ENCODE measurements at regions of chr2 and their contacts with region 1.

Region 1: GRCh38 chr2:61888267-61889055 is at the start of gene CCT4:
- DNase-seq: peak; percentile 86
- H3K4me3 Mint-ChIP-seq: peak within 1 kb of the TSS; percentile 95
- H3K27ac Mint-ChIP-seq: peak within 1 kb of the TSS; percentile 97
- H3K4me1 Mint-ChIP-seq: peaks cover 23% of the 10 kb centered on the region
- H3K27me3 Mint-ChIP-seq: no peaks in the 10 kb centered on the region
- total RNA-seq, gene CCT4: 354 and 381 TPM in 2 replicates

Region 2: DNA sequence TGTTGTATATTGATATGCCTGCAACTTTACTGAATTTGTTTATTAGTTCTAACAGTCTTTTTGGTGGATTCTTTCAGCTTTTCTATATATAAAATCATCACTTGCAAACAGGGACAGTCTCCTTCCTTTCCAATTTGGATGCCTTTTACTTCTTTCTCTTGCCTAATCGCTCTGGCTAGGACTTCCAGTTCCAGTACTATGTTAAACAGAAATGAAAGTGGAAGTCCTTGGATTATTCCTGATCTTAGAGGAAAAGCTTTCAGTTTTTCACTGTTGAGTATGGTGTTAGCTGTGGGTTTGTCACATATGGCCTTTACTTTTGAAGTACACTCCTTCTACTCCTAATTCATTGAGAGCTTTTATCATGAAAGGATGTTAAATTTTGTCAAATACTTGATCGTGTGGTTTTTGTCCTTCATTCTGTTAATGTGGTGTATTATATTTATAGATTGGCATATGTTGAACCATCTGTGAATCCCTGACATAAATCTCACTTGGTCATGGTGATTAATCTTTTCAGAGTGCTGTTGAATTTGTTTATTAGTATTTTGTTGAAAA is 954.2 kb before region 1 on chr2:
- intact Hi-C with region 1: loop called (anchors 10 kb)
- DNase-seq: no peak
- H3K4me3 Mint-ChIP-seq: no peak overlapping the region
- H3K27ac Mint-ChIP-seq: no peak overlapping the region
- H3K4me1 Mint-ChIP-seq: peaks cover 17% of the 10 kb centered on the region
- H3K27me3 Mint-ChIP-seq: no peaks in the 10 kb centered on the region

Region 3: DNA sequence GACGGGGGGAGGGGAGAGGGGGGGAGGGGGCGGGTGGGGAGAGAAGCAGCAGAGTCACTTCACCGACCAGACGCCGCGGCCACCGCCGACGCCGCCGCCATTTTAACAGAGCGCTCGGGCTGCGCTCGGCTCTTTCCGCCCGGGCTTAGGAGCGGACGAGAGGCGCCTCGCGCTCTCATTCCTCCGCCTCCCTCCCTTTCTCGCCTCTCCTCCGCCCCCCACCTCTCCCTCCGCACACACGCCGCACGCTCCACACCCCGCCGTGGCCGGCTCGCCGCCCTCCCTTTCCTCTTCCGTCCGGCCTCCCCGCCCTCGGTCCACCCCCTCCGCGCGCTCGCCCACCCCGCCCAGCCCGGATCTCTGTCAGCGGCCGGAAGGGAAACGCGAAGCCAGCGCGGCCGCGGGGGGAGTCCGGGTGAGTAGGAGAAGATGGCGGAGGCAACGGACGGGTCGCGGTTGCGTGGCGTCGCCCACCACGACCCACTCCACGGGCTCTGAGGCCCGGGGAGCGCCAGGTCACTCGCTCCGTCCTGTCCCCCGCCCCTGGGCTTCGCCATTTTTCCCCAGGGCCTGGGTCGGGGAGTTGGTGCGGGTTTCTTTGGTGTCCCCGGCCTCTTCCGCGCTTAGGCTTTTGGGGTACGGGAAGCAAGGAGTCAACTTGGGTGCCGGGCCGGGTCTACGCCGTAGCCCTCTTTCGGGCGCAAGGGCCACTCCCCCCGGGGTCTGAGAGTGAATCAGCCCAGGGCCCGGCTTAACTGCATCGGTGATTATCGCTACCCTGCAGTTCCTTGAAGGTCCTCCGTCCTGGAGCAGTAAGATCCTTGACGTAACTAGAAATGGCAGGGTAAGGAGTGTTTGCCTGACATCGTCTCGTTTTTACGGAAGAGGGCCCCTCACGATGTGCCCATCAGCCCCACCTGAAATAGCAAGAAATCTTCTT is 417.2 kb before region 1 on chr2 and contains the start of gene USP34:
- intact Hi-C with region 1: loop called (anchors 5 kb)
- DNase-seq: peak; percentile 88
- H3K4me3 Mint-ChIP-seq: peak within 1 kb of the TSS; percentile 95
- H3K27ac Mint-ChIP-seq: peak within 1 kb of the TSS; percentile 94
- H3K4me1 Mint-ChIP-seq: peaks cover 28% of the 10 kb centered on the region
- H3K27me3 Mint-ChIP-seq: no peaks in the 10 kb centered on the region
- total RNA-seq, gene USP34: 91.3 and 98.1 TPM in 2 replicates

Region 4: GRCh38 chr2:61694312-61695274 is 193.9 kb before region 1 on chr2:
- intact Hi-C with region 1: loop called (anchors 10 kb)
- DNase-seq: peak; percentile 80
- H3K4me3 Mint-ChIP-seq: peak overlapping the region; percentile 89
- H3K27ac Mint-ChIP-seq: peak overlapping the region; percentile 76
- H3K4me1 Mint-ChIP-seq: peaks cover 14% of the 10 kb centered on the region
- H3K27me3 Mint-ChIP-seq: peaks cover 2% of the 10 kb centered on the region

Region 5: GRCh38 chr2:61877571-61878245 is 10.8 kb before region 1 on chr2:
- intact Hi-C with region 1: no loop called
- DNase-seq: no peak
- H3K4me3 Mint-ChIP-seq: no peak overlapping the region
- H3K27ac Mint-ChIP-seq: no peak overlapping the region
- H3K4me1 Mint-ChIP-seq: no peaks in the 10 kb centered on the region
- H3K27me3 Mint-ChIP-seq: no peaks in the 10 kb centered on the region

Region 6: DNA sequence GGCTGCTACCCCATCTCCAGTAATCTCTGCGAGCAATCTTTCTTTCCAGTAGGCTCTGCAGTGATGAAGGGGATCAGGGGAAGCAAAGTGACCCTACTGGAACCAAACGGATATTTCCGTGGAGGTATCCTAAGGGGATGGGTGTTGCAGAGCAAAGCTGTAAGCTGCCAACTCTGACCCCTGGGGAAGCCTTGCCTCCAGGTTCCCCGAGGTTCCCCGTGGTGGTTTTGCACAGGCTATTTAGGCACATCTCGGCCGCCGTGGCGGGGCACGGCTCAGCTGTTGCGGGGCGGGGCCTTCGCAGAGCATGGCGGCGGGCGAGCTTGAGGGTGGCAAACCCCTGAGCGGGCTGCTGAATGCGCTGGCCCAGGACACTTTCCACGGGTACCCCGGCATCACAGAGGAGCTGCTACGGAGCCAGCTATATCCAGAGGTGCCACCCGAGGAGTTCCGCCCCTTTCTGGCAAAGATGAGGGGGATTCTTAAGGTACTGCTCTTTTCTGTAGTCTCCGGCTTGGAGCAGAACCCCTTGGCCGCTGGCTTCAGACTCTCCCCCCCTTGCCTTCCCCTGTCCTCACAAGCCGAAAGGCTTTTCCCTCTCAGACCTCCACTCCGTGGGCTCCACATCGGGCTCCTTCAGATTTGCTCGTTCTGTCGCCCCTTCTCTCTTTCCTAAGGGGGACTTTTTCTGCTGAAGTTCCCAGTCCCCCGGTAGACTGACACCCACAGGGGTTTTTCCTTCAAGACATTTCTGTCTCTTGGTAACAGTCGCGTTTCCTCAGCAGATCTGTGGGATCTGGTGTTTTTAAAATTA is 17.1 kb after region 1 on chr2 and contains the start of gene COMMD1:
- intact Hi-C with region 1: loop called (anchors 1 kb)
- DNase-seq: peak; percentile 78
- H3K4me3 Mint-ChIP-seq: peak within 1 kb of the TSS; percentile 97
- H3K27ac Mint-ChIP-seq: peak within 1 kb of the TSS; percentile 81
- H3K4me1 Mint-ChIP-seq: peaks cover 18% of the 10 kb centered on the region
- H3K27me3 Mint-ChIP-seq: no peaks in the 10 kb centered on the region
- total RNA-seq, gene COMMD1: 25.4 and 28.9 TPM in 2 replicates

Region 7: DNA sequence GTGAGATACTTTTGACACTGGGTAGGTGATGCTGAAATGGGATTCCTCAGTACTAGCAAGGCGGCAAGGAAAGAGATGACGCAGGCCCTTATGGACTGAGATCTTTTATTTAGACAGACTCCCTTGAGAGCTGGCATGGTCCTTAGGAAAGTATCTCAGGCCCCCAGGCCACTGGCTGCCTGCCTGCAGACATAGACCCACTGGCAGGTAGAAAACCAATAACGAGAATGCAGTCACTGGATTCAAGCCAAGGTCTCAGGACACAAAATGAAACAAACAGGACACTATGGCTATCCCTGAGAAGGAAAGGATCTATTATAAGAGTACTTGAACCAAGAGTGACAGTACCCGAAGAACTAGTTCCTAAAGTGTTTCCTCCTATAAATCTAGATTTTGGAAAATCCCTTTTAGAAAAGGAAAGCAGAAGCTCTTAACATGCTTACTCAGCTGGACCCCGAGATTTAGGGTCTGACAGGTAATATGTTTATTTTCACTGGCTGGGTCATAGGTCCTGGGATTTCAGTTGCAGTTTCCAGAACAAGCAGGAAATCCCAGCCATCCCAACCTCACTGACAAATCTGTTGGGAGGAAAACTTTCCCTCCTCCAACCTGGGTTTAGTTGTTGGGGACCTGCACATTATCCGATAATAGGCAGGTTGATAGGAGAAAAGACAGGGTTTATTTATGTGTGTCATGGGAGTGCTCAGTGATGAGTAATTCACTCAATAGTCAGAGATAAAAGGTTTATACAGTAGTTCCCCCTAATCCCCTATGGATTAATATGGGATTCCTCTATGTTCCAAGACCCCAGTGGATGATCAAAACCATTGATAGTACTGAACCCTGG is 61.5 kb after region 1 on chr2:
- intact Hi-C with region 1: no loop called
- DNase-seq: no peak
- H3K4me3 Mint-ChIP-seq: no peak overlapping the region
- H3K27ac Mint-ChIP-seq: no peak overlapping the region
- H3K4me1 Mint-ChIP-seq: no peaks in the 10 kb centered on the region
- H3K27me3 Mint-ChIP-seq: peaks cover 4% of the 10 kb centered on the region

Region 8: DNA sequence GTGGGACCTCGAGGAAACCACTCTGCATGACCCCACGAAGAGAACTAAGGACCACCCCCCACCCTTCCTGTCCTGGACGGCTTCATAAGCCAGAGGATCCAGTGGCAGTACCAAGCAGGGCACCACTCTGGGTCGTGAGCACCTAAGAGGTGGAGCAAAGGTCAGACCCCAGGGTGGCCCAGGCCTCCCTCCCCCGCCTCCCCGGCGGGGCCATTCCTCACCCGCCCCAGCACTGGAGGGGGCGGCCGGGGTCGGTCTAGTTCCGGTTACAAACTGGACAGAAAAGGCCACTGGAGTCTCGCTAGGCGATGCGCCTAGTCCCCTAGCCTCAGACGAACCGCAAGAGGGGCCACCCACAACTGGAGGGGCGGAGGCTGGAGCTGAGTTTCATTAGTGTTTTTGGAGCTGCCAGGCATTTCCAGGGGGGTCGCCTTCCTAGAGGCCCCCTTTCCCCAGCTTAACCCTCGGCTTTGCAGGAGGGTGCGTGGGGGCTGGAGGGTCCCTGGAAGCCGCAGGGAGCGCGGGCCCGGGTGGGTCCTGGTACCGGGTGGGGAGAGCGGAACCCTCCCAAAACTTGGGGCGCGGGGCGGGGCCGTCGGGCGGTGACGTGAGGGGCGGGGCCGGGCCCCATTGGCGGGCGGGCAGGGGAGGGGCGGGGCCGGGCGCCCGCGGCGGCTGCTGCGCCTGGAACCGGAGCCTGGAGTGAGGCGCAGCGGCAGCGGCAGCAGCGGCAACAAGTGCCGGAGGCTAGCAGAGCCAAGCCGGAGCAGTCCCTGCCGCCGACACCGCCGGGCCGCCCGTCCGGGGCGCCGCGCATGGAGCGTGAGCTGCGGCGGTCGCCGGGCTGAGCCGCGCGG is 307.2 kb after region 1 on chr2 and contains the start of gene B3GNT2:
- intact Hi-C with region 1: loop called (anchors 1 kb)
- DNase-seq: peak; percentile 75
- H3K4me3 Mint-ChIP-seq: peak within 1 kb of the TSS; percentile 87
- H3K27ac Mint-ChIP-seq: peak within 1 kb of the TSS; percentile 89
- H3K4me1 Mint-ChIP-seq: peaks cover 36% of the 10 kb centered on the region
- H3K27me3 Mint-ChIP-seq: no peaks in the 10 kb centered on the region
- total RNA-seq, gene B3GNT2: 32.8 and 37.3 TPM in 2 replicates